ENCODE measurements at regions of chr1 and their contacts with region 1.

Region 1: GRCh38 chr1:174999216-174999925 is 376 bp upstream of the CACYBP start:
- DNase-seq: peak; percentile 89 to 99 (median 98)
- ATAC-seq: peak; percentile 88
- H3K4me3 ChIP-seq: peak overlapping the region; percentile 72
- H3K4me3 Mint-ChIP-seq: no peak overlapping the region
- H3K27ac ChIP-seq: peak overlapping the region; percentile 99
- H3K27ac Mint-ChIP-seq: no peak overlapping the region
- H3K4me1 ChIP-seq: peaks cover 10 to 18% of the 10 kb centered on the region in 2 donors
- H3K4me1 Mint-ChIP-seq: peaks cover 34 to 43% (median 39%) of the 10 kb centered on the region in 7 donors
- H3K27me3 ChIP-seq: no peaks in the 10 kb centered on the region
- H3K27me3 Mint-ChIP-seq: no peaks in the 10 kb centered on the region

Region 2: DNA sequence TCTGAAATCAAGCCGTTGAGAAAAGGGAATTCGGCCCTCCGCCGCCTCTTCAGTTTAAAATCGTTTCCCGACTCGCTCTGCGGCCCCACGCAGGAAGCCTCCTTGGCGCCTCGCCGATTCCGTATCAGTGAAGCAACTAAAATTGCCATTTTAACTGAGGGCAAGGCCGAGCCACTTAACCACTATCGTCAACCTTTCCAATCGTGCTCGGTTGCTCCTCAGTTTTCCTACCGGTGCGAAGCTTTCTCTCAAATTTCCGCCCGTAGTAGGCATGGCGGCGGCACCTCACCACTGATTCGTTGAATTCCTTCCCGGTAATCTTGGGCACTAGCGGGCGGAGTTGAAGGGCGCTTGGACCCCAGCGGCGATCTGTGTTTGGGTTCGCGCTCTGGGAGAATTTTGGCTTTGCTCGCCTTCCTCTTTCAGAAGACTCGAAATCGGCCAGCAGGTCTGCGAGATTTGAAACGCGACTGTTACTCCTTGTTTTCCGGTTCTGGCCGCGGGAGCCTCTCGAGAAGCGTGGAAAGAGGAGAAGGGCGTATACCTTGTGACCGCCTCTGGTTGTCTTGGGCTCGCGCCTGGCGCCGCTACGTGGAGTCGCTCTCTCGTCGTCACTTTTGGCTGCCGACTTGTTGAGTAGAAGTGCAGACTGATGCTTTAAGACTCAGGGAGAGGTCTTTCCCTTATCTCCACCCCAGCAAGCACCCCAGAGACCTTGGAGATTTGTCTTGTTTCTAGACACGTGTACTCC is 1174.9 kb before region 1 on chr1 and contains the starts of genes CENPL and DARS2:
- CTCF ChIA-PET with region 1: no interaction called
- POLR2A ChIA-PET with region 1: no interaction called
- intact Hi-C with region 1: loop called in 1 of 2 experiments (anchors 1 kb)
- DNase-seq: peak; percentile 67 to 93 (median 91)
- ATAC-seq: peak; percentile 94
- H3K4me3 ChIP-seq: peak within 1 kb of the TSS; percentile 99
- H3K4me3 Mint-ChIP-seq: peak within 1 kb of the TSS; percentile 87 to 99 (median 94)
- H3K27ac ChIP-seq: peak within 1 kb of the TSS; percentile 80
- H3K27ac Mint-ChIP-seq: peak within 1 kb of the TSS; percentile 91 to 98 (median 96)
- H3K4me1 ChIP-seq: peaks cover 10 to 14% of the 10 kb centered on the region in 2 donors
- H3K4me1 Mint-ChIP-seq: peaks cover 32 to 68% (median 50%) of the 10 kb centered on the region in 7 donors
- H3K27me3 ChIP-seq: no peaks in the 10 kb centered on the region
- H3K27me3 Mint-ChIP-seq: no peaks in the 10 kb centered on the region
- total RNA-seq, gene CENPL: 5.2 to 25.1 (median 9.5) TPM
- total RNA-seq, gene DARS2: 3.6 to 26.0 (median 13.5) TPM

Region 3: DNA sequence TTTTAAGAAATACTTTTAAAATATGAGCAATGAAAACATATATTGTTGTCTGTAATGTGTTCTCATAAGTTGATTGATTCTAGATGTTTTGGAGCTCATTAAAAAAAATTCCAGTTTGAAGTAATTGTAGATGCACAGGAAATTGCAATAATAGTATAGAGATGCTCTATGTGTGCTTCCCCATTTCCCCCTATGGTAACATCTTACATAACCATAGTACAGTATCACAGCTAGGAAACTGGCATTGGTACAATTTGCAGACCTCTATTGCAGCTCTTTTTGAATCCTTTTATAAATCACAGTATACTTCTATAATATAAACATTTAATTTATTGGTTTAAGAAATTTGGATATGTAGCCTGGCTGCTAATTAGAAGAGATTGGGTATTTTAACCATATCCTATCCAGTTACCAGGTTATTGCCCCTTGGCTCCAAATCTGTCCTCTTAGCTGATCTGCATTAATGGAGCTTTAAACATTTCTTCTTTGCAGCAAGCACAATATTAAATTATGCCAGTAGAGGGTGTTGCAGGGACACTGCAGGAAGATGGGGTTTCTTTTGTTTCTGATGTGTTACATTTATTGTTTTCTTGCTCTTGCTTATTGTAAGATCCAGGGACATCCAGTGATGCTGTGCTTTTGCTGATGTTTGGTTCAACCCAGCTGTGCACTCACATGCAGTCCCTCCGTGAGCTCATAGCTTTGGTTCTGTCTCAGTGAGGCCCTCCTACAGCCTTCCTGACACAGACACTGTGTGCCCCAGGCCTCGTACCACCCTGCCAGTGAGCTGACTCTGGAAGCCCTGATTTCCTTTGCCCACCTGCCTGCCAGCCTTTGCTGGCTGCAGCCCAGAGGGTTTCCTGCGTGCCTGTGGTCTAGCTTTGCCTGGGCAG is 736.8 kb before region 1 on chr1:
- CTCF ChIA-PET with region 1: no interaction called
- POLR2A ChIA-PET with region 1: no interaction called
- intact Hi-C with region 1: loop called (anchors 1 to 2 kb)
- DNase-seq: peak in 6 of 9 donors; percentile 3 to 25 (median 14)
- ATAC-seq: peak; percentile 36
- H3K4me3 ChIP-seq: no peak overlapping the region
- H3K4me3 Mint-ChIP-seq: no peak overlapping the region
- H3K27ac ChIP-seq: no peak overlapping the region
- H3K27ac Mint-ChIP-seq: no peak overlapping the region
- H3K4me1 ChIP-seq: no peaks in the 10 kb centered on the region
- H3K4me1 Mint-ChIP-seq: peaks cover 0 to 2% (median 0%) of the 10 kb centered on the region in 7 donors
- H3K27me3 ChIP-seq: no peaks in the 10 kb centered on the region
- H3K27me3 Mint-ChIP-seq: no peaks in the 10 kb centered on the region

Region 4: GRCh38 chr1:174874331-174875053 is 124.9 kb before region 1 on chr1:
- CTCF ChIA-PET with region 1: no interaction called
- POLR2A ChIA-PET with region 1: interaction called, 15 read pairs
- intact Hi-C with region 1: no loop called
- DNase-seq: no peak
- ATAC-seq: peak; percentile 49
- H3K4me3 ChIP-seq: no peak overlapping the region
- H3K4me3 Mint-ChIP-seq: peak overlapping the region; percentile 55 to 77 (median 65)
- H3K27ac ChIP-seq: no peak overlapping the region
- H3K27ac Mint-ChIP-seq: peak overlapping the region in 8 of 9 donors; percentile 19 to 80 (median 65)
- H3K4me1 ChIP-seq: no peaks in the 10 kb centered on the region
- H3K4me1 Mint-ChIP-seq: peaks cover 4 to 40% (median 21%) of the 10 kb centered on the region in 7 donors
- H3K27me3 ChIP-seq: no peaks in the 10 kb centered on the region
- H3K27me3 Mint-ChIP-seq: no peaks in the 10 kb centered on the region

Region 5: GRCh38 chr1:174968750-174969244 is 30.6 kb before region 1 on chr1:
- CTCF ChIA-PET with region 1: interaction called, 13 read pairs
- POLR2A ChIA-PET with region 1: interaction called, 227 read pairs
- intact Hi-C with region 1: loop called (anchors 1 kb)
- DNase-seq: peak in 7 of 9 donors; percentile 74 to 90 (median 85)
- ATAC-seq: peak; percentile 75
- H3K4me3 ChIP-seq: peak overlapping the region; percentile 18
- H3K4me3 Mint-ChIP-seq: peak overlapping the region; percentile 56 to 86 (median 74)
- H3K27ac ChIP-seq: peak overlapping the region; percentile 71
- H3K27ac Mint-ChIP-seq: peak overlapping the region; percentile 87 to 97 (median 92)
- H3K4me1 ChIP-seq: peaks cover 69 to 76% of the 10 kb centered on the region in 2 donors
- H3K4me1 Mint-ChIP-seq: peaks cover 43 to 87% (median 74%) of the 10 kb centered on the region in 7 donors
- H3K27me3 ChIP-seq: no peaks in the 10 kb centered on the region
- H3K27me3 Mint-ChIP-seq: no peaks in the 10 kb centered on the region

Region 6: GRCh38 chr1:175015243-175015642 is 15.9 kb after region 1 on chr1:
- CTCF ChIA-PET with region 1: interaction called, 3 read pairs
- POLR2A ChIA-PET with region 1: interaction called, 185 read pairs
- intact Hi-C with region 1: no loop called
- DNase-seq: no peak
- ATAC-seq: no peak
- H3K4me3 ChIP-seq: no peak overlapping the region
- H3K4me3 Mint-ChIP-seq: no peak overlapping the region
- H3K27ac ChIP-seq: no peak overlapping the region
- H3K27ac Mint-ChIP-seq: peak overlapping the region in 5 of 9 donors; percentile 4 to 81 (median 33)
- H3K4me1 ChIP-seq: no peaks in the 10 kb centered on the region
- H3K4me1 Mint-ChIP-seq: peaks cover 4 to 17% (median 10%) of the 10 kb centered on the region in 7 donors
- H3K27me3 ChIP-seq: no peaks in the 10 kb centered on the region
- H3K27me3 Mint-ChIP-seq: no peaks in the 10 kb centered on the region

Region 7: GRCh38 chr1:175192630-175193526 is 193.5 kb after region 1 on chr1 and contains the start of gene KIAA0040:
- CTCF ChIA-PET with region 1: no interaction called
- POLR2A ChIA-PET with region 1: interaction called, 3 read pairs
- intact Hi-C with region 1: loop called (anchors 1 kb)
- DNase-seq: peak; percentile 25 to 66 (median 40)
- ATAC-seq: peak; percentile 78
- H3K4me3 ChIP-seq: peak within 1 kb of the TSS; percentile 90
- H3K4me3 Mint-ChIP-seq: peak within 1 kb of the TSS; percentile 89 to 100 (median 97)
- H3K27ac ChIP-seq: peak within 1 kb of the TSS; percentile 80
- H3K27ac Mint-ChIP-seq: peak within 1 kb of the TSS; percentile 73 to 97 (median 92)
- H3K4me1 ChIP-seq: peaks cover 38 to 43% of the 10 kb centered on the region in 2 donors
- H3K4me1 Mint-ChIP-seq: peaks cover 40 to 67% (median 53%) of the 10 kb centered on the region in 7 donors
- H3K27me3 ChIP-seq: no peaks in the 10 kb centered on the region
- H3K27me3 Mint-ChIP-seq: no peaks in the 10 kb centered on the region
- total RNA-seq, gene KIAA0040: 21.7 to 88.1 (median 27.0) TPM

Measured in naive thymus-derived CD4-positive, alpha-beta T cell (primary cell).